ENCODE measurements at regions of chr11 and their contacts with region 1.

Region 1: GRCh38 chr11:93791493-93791892 is 7.4 kb downstream of the MED17 start:
- DNase-seq: no peak
- H3K4me3 ChIP-seq: no peak overlapping the region
- H3K27ac ChIP-seq: no peak overlapping the region
- H3K4me1 ChIP-seq: no peaks in the 10 kb centered on the region
- H3K27me3 ChIP-seq: no peaks in the 10 kb centered on the region
- CTCF ChIP-seq: no peak

Region 2: GRCh38 chr11:93668171-93668570 is 123.3 kb before region 1 on chr11:
- intact Hi-C with region 1: no loop called
- DNase-seq: no peak
- H3K4me3 ChIP-seq: no peak overlapping the region
- H3K27ac ChIP-seq: no peak overlapping the region
- H3K4me1 ChIP-seq: no peaks in the 10 kb centered on the region
- H3K27me3 ChIP-seq: no peaks in the 10 kb centered on the region
- CTCF ChIP-seq: no peak

Region 3: GRCh38 chr11:93685196-93685595 is 106.3 kb before region 1 on chr11:
- intact Hi-C with region 1: no loop called
- DNase-seq: no peak
- H3K4me3 ChIP-seq: no peak overlapping the region
- H3K27ac ChIP-seq: no peak overlapping the region
- H3K4me1 ChIP-seq: no peaks in the 10 kb centered on the region
- H3K27me3 ChIP-seq: no peaks in the 10 kb centered on the region
- CTCF ChIP-seq: no peak

Region 4: DNA sequence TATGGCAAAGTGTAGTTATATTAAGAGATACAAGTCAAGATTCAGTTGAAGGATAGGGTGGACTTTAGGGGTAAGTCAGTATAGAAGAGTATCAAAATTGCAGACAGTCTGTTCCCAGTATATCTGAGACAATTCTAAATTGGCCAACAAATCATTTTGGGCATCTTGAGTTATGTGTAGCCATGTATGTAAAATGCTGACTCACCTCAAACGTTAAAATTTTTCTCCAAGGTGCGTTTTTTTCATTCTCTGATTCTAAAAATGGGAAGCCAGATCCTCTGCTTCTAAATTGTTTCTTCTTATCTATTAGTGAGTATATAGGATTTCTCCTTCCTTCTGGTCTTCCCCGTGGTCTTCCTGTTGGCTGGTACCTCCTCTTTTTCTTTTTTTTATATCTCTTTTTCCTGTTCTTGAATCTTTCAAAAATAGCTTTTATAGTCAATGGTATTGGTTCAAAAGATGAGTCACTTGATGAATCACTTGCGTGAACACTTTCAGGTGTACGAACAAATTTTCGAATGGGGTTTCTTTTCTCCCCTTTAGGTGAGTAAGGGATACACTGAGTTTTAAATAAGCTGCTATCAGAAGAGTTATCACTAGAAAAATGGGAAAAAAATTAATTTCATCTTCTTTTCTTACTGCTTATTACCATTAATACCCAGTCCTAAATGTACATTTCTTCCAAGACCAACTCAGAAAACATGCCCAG is 53.4 kb before region 1 on chr11:
- intact Hi-C with region 1: loop called (anchors 10 kb)
- DNase-seq: no peak
- H3K4me3 ChIP-seq: peak overlapping the region in 1 of 3 donors; percentile 80
- H3K27ac ChIP-seq: no peak overlapping the region
- H3K4me1 ChIP-seq: peaks cover 0 to 14% (median 9%) of the 10 kb centered on the region in 3 donors
- H3K27me3 ChIP-seq: no peaks in the 10 kb centered on the region
- CTCF ChIP-seq: no peak

Region 5: DNA sequence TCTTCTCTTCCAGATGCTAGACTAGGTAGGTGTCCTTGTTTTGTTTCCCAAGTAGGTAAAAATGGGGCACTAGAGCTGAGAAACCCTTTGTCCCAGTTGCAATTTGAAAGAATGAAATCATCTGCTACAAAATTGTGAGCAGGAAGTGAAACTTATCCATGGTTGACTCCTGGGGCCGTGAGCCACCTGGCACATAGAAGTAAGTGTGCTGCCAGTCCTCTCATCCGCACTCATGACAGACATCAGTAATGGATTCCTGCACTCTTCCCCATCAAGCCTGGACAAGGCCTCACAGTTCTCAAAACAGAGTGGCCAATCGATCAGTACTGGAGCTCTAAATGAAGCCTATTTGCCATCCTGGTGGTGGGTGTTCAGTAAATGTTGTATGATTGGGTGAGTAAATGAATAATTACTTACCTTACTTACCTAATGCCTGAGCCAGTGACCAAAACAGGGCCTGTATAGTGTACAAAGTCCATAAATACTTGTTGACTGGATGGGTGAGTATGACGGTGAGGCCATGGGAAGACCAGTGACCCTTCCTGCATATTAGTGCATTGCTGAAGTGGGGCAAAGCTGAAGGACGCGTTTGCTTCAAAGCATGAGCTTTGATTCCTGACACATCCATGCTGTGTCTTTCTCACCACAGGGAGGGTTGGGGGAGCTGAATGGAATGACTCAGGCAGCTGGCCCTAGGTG is 160.7 kb after region 1 on chr11:
- intact Hi-C with region 1: no loop called
- DNase-seq: no peak
- H3K4me3 ChIP-seq: no peak overlapping the region
- H3K27ac ChIP-seq: no peak overlapping the region
- H3K4me1 ChIP-seq: no peaks in the 10 kb centered on the region
- H3K27me3 ChIP-seq: no peaks in the 10 kb centered on the region
- CTCF ChIP-seq: no peak

Measured in kidney (tissue), 22 donors.